HepG2 (cell line): ENCODE measurements at regions of chr1 and their contacts with region 1.

Region 1: GRCh38 chr1:83931658-83932253 is 67.2 kb downstream of the TTLL7 start:
- DNase-seq: peak; percentile 35
- ATAC-seq: peak; percentile 77
- H3K4me3 ChIP-seq: no peak overlapping the region
- H3K27ac ChIP-seq: no peak overlapping the region
- H3K4me1 ChIP-seq: no peaks in the 10 kb centered on the region
- H3K27me3 ChIP-seq: no peaks in the 10 kb centered on the region
- CTCF ChIP-seq: peak; percentile 69
- EP300 ChIP-seq: no peak
- POLR2A ChIP-seq: no peak
- RAD21 ChIP-seq: peak; percentile 55

Region 2: DNA sequence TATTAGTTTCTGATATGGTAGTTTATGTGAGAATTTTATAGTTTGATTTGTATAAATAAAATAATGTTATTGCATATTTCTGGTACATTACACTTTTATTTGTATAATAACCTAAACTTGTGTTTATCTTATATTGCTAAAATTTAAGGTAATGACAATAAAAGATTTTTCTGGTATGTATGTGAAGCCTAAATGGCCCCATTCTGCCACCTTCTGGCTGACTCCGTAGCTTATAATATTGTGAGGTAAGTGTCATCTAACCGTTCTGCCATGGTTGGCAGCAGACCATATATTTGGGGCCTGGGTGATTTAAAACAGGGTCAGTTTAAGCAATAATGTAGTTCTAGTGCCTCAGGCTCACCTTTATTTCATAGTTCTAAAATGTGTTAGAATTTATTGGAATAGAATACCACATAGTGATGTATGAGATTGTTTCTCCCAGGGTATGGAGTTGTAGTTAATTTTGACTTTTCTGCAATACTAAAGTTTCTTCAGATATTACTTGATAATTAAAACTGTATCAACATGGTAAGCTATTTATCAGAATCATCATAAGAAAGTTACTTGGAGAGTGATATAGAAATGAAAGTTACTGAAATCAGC is 191.1 kb after region 1 on chr1:
- CTCF ChIA-PET with region 1: interaction called, 23 read pairs
- POLR2A ChIA-PET with region 1: no interaction called
- in situ Hi-C with region 1: loop called (anchors 10 kb)
- intact Hi-C with region 1: loop called (anchors 1 kb)
- DNase-seq: peak; percentile 38
- ATAC-seq: peak; percentile 81
- H3K4me3 ChIP-seq: no peak overlapping the region
- H3K27ac ChIP-seq: no peak overlapping the region
- H3K4me1 ChIP-seq: no peaks in the 10 kb centered on the region
- H3K27me3 ChIP-seq: no peaks in the 10 kb centered on the region
- CTCF ChIP-seq: peak; percentile 61
- EP300 ChIP-seq: no peak
- POLR2A ChIP-seq: no peak
- RAD21 ChIP-seq: no peak

Region 3: DNA sequence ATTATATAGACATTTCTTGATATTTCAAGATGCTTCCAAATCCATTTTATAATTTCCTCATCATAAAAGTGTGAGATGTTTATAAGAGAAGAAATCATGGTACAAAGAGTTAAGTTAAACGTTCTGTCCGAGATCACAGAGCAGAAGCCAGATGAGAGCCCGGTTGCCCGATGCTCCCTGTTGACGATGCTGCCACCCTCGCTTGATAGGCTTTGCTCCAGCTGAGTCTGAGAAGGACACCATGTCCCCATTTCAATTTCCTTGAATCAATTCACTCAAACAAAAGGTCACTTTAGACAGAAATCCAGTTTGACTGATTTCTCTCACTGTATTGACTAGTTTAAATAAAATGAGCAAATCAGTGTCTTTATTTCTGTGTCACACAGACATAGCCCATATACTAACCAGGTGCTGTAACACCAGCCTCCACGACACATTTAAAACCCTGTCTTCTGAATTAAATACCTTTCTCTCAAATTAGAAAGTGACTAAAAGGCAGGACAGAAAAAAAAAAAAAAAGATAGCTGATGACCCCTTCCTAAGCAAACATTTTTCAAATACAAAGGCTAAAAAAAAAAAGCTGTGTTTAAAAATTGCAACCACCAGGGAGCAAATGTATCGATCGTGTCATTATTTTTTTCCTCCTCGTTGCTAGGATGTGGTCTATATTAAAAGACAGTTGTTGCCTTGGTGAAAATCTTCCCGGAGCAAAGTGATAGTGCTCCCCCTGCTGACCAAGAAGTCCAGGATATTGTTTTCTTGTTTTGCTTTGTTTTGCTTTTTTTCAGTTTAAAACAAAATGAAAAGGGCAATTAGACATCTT is 501.7 kb after region 1 on chr1:
- CTCF ChIA-PET with region 1: interaction called, 11 read pairs
- POLR2A ChIA-PET with region 1: no interaction called
- in situ Hi-C with region 1: loop called (anchors 10 kb)
- intact Hi-C with region 1: loop called (anchors 1 kb)
- DNase-seq: peak; percentile 30
- ATAC-seq: peak; percentile 61
- H3K4me3 ChIP-seq: no peak overlapping the region
- H3K27ac ChIP-seq: no peak overlapping the region
- H3K4me1 ChIP-seq: no peaks in the 10 kb centered on the region
- H3K27me3 ChIP-seq: no peaks in the 10 kb centered on the region
- CTCF ChIP-seq: peak; percentile 59
- EP300 ChIP-seq: no peak
- POLR2A ChIP-seq: no peak
- RAD21 ChIP-seq: no peak

Region 4: DNA sequence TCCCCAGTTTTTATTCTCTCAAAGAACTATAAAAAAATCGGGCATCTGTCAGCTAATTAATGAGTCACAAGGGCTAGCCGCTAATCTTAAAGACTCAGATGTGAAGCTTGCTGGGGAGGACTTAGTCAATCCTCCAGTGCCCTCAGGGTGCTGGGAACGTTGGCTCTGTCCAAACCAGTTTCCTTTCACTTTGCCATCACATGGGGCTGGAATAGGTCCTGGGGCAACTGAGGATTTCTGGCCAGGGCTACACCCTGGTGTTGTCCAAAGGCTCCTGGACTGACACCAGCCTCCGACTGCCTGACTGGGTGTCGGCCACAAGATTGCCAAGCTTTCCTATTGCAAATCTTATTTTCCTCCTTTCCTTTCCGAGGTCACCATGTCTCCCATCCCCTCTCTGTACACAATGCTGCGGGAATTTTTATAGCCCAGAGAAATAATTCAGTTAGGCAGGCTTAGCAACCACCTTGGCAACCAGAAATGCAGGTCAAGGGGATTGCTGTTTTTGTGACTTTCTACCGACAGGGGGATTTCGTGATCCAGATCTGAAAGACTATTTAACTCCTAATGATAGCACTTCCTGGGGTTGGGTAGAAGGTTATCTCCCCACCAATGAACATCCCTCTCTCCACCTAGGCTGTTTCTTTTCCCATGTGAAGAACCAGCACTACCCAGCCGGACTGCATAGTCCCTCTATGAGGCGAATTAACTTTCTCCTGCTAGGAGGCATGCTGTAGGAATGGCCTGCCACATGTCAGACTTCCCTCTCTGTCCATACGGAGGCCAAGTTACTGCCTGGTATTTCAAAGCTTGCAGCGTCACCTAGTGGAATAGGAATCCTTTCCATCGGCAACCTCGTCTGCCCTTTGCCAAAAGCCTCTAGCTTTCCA is 672.4 kb after region 1 on chr1:
- CTCF ChIA-PET with region 1: interaction called, 11 read pairs
- POLR2A ChIA-PET with region 1: no interaction called
- in situ Hi-C with region 1: loop called (anchors 25 kb)
- intact Hi-C with region 1: loop called (anchors 1 kb)
- DNase-seq: peak; percentile 85
- ATAC-seq: peak; percentile 97
- H3K4me3 ChIP-seq: peak overlapping the region; percentile 5 to 59 (median 45); a peak in 4 of 6 replicates
- H3K27ac ChIP-seq: no peak overlapping the region
- H3K4me1 ChIP-seq: peaks cover 17% of the 10 kb centered on the region; the same call in 1 of the 2 replicates
- H3K27me3 ChIP-seq: peaks cover 0 to 6% of the 10 kb centered on the region in 2 experiments; a peak in 3 of 5 replicates
- CTCF ChIP-seq: peak; percentile 93
- EP300 ChIP-seq: no peak
- POLR2A ChIP-seq: no peak
- RAD21 ChIP-seq: peak; percentile 89

Region 5: DNA sequence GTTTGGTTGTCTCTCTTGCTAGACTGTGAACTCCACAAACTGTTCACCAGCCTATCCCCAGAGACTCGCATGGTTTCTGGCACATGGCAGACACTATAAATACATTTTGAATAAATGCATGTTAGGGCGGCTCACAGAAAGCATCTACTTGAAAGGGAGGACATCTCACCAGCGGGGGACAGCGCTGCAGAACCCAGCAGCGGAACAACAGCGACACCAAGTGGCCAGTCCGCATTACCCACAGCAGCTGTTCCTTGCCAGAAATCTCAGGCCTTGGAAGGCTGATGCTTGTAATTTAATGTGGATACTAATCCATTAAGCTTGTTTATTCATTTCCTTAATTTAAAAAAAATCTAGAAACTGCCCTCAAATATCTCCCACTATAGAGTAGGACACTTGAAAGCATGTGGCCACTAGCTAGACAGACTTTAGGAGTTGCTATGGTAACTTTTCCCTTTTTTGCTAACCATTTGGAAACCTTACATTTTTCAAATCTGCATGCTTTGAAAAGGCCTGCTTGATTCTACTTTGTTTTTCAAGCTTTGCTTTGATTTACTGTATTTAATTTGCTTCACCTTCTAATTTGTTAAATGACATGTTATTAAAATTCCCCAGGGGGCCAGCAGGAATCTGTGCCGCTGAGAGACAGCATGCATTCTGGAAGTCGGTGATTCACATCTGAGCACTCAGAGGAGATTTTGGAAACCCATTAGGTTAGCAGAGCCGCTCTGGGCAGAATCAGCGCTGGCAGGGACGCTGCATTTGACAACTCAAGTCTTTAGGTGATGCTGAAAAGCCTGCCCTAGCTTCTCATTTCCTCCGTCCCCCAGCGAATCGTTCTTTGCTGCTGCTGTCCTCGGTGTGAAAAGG is 822.0 kb after region 1 on chr1:
- CTCF ChIA-PET with region 1: interaction called, 4 read pairs
- POLR2A ChIA-PET with region 1: no interaction called
- in situ Hi-C with region 1: loop called (anchors 10 kb)
- intact Hi-C with region 1: loop called (anchors 5 kb)
- DNase-seq: peak; percentile 31
- ATAC-seq: peak; percentile 93
- H3K4me3 ChIP-seq: no peak overlapping the region
- H3K27ac ChIP-seq: no peak overlapping the region
- H3K4me1 ChIP-seq: no peaks in the 10 kb centered on the region
- H3K27me3 ChIP-seq: no peaks in the 10 kb centered on the region
- CTCF ChIP-seq: peak; percentile 93
- EP300 ChIP-seq: no peak
- POLR2A ChIP-seq: no peak
- RAD21 ChIP-seq: peak; percentile 89